OCI-LY7 (cell line): ENCODE measurements at regions of chr17 and their contacts with region 1.

Region 1: DNA sequence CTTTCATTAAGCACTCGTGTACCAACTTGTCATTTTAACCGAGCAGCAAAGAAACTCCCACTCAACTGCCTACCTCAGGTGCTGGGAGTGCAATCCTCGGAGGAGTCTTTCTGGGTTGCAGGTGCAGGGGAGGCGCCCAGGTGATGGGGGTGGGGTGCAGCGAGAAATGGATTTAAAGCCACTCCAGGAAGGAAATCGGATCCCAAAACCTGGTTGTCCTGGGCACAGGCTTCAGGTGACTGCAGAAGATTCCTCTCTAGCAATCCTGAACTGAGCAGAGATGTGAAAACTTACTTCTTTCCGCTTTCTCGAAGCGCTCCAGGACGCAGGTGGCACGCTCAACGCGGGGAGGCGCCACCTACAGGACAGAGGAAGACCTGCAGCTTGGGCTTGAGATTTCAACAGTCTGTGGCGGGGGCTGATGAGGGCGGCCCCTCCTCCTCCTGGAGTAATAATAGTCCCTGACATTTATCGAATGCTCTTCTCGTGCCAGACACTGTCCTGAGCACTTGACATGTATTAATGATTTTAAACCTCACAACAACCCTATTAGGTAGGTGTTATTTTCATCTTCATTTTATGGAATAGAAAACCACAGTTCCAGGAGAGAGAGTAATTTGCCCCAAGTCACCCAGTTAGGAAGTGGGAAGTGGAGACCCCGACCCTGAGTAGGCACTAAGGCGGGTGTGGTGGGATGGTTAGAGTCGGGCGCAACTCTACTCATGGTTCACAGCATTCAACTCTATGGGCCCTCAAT is 27.2 kb upstream of the SKAP1 start:
- DNase-seq: peak; percentile 88
- H3K4me3 ChIP-seq: no peak overlapping the region
- H3K27ac ChIP-seq: no peak overlapping the region
- H3K4me1 ChIP-seq: peaks cover 65% of the 10 kb centered on the region
- CTCF ChIP-seq: peak; percentile 98

Region 2: DNA sequence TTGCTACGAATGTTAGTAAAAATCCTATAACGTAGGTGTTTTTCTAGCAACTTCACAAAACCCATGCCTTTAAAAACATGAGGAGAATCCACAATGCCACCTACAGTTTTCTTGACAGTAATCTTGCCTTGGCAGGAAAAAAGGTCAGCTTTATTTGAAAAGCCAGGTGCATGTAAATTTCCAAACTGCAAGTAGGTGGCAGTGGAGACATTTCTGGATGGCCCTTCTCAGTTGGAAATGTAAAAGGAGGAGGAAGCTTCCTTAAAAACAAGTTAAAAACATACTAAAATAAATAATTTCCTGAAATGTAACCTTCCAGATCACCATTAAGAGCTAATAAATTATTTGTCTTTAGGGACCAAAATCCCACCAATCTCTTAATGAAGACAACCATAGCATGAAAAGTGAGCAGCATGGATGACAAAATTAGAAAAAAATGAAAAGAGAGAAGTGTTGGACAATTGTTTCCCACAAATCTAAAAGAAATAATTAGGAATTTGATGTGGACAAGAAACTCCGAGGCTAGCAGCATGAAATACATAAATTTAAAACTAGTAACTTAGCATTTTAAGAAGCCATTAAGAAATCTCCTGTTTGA is 197.5 kb before region 1 on chr17:
- CTCF ChIA-PET with region 1: no interaction called
- POLR2A ChIA-PET with region 1: no interaction called
- intact Hi-C with region 1: no loop called
- DNase-seq: peak; percentile 41
- H3K4me3 ChIP-seq: no peak overlapping the region
- H3K27ac ChIP-seq: no peak overlapping the region
- H3K4me1 ChIP-seq: no peaks in the 10 kb centered on the region
- CTCF ChIP-seq: peak; percentile 85

Region 3: GRCh38 chr17:48351831-48352332 is 105.4 kb before region 1 on chr17:
- CTCF ChIA-PET with region 1: no interaction called
- POLR2A ChIA-PET with region 1: interaction called, 3 read pairs
- intact Hi-C with region 1: loop called (anchors 1 kb)
- DNase-seq: peak; percentile 64
- H3K4me3 ChIP-seq: no peak overlapping the region
- H3K27ac ChIP-seq: no peak overlapping the region
- H3K4me1 ChIP-seq: peaks cover 4% of the 10 kb centered on the region
- CTCF ChIP-seq: peak; percentile 95

Region 4: GRCh38 chr17:48593840-48594537 is 136.7 kb after region 1 on chr17:
- CTCF ChIA-PET with region 1: no interaction called
- POLR2A ChIA-PET with region 1: no interaction called
- intact Hi-C with region 1: no loop called
- DNase-seq: peak; percentile 78
- H3K4me3 ChIP-seq: no peak overlapping the region
- H3K27ac ChIP-seq: no peak overlapping the region
- H3K4me1 ChIP-seq: peaks cover 6% of the 10 kb centered on the region
- CTCF ChIP-seq: peak; percentile 85